ENCODE measurements at regions of chr18 and their contacts with region 1.

Region 1: GRCh38 chr18:12947355-12948041 is at the start of gene SEH1L:
- DNase-seq: peak; percentile 96
- ATAC-seq: peak; percentile 90
- H3K4me3 Mint-ChIP-seq: peak within 1 kb of the TSS; percentile 96
- H3K27ac Mint-ChIP-seq: peak within 1 kb of the TSS; percentile 97
- H3K4me1 Mint-ChIP-seq: peaks cover 24% of the 10 kb centered on the region
- H3K27me3 Mint-ChIP-seq: no peaks in the 10 kb centered on the region
- CTCF ChIP-seq: no peak
- total RNA-seq, gene SEH1L: 67.0 and 79.3 TPM in 2 replicates

Region 2: GRCh38 chr18:11908182-11909060 is 1039.1 kb before region 1 on chr18 and contains the start of gene MPPE1:
- CTCF ChIA-PET with region 1: no interaction called
- POLR2A ChIA-PET with region 1: no interaction called
- intact Hi-C with region 1: loop called (anchors 2 kb)
- DNase-seq: peak; percentile 87
- ATAC-seq: peak; percentile 91
- H3K4me3 Mint-ChIP-seq: peak within 1 kb of the TSS; percentile 94
- H3K27ac Mint-ChIP-seq: peak within 1 kb of the TSS; percentile 94
- H3K4me1 Mint-ChIP-seq: peaks cover 25% of the 10 kb centered on the region
- H3K27me3 Mint-ChIP-seq: no peaks in the 10 kb centered on the region
- CTCF ChIP-seq: no peak
- total RNA-seq, gene MPPE1: 39.0 and 52.9 TPM in 2 replicates

Region 3: GRCh38 chr18:12408247-12408869 is 539.1 kb before region 1 on chr18:
- CTCF ChIA-PET with region 1: no interaction called
- POLR2A ChIA-PET with region 1: no interaction called
- intact Hi-C with region 1: loop called (anchors 1 kb)
- DNase-seq: no peak
- ATAC-seq: peak; percentile 8
- H3K4me3 Mint-ChIP-seq: peak overlapping the region; percentile 76
- H3K27ac Mint-ChIP-seq: peak overlapping the region; percentile 68
- H3K4me1 Mint-ChIP-seq: peaks cover 18% of the 10 kb centered on the region
- H3K27me3 Mint-ChIP-seq: peaks cover 7% of the 10 kb centered on the region
- CTCF ChIP-seq: no peak

Region 4: GRCh38 chr18:12777500-12777944 is 170.0 kb before region 1 on chr18:
- CTCF ChIA-PET with region 1: no interaction called
- POLR2A ChIA-PET with region 1: no interaction called
- intact Hi-C with region 1: no loop called
- DNase-seq: no peak
- ATAC-seq: no peak
- H3K4me3 Mint-ChIP-seq: peak overlapping the region; percentile 56
- H3K27ac Mint-ChIP-seq: no peak overlapping the region
- H3K4me1 Mint-ChIP-seq: no peaks in the 10 kb centered on the region
- H3K27me3 Mint-ChIP-seq: no peaks in the 10 kb centered on the region
- CTCF ChIP-seq: no peak

Region 5: GRCh38 chr18:12838178-12838634 is 109.3 kb before region 1 on chr18:
- CTCF ChIA-PET with region 1: no interaction called
- POLR2A ChIA-PET with region 1: interaction called, 4 read pairs
- intact Hi-C with region 1: loop called (anchors 1 kb)
- DNase-seq: no peak
- ATAC-seq: no peak
- H3K4me3 Mint-ChIP-seq: peak overlapping the region; percentile 52
- H3K27ac Mint-ChIP-seq: peak overlapping the region; percentile 84
- H3K4me1 Mint-ChIP-seq: peaks cover 44% of the 10 kb centered on the region
- H3K27me3 Mint-ChIP-seq: no peaks in the 10 kb centered on the region
- CTCF ChIP-seq: no peak

Region 6: GRCh38 chr18:12990967-12991838 is 43.7 kb after region 1 on chr18 and contains the start of gene CEP192:
- CTCF ChIA-PET with region 1: interaction called, 3 read pairs
- POLR2A ChIA-PET with region 1: interaction called, 41 read pairs
- intact Hi-C with region 1: loop called (anchors 1 kb)
- DNase-seq: peak; percentile 93
- ATAC-seq: peak; percentile 96
- H3K4me3 Mint-ChIP-seq: peak within 1 kb of the TSS; percentile 93
- H3K27ac Mint-ChIP-seq: peak within 1 kb of the TSS; percentile 94
- H3K4me1 Mint-ChIP-seq: peaks cover 32% of the 10 kb centered on the region
- H3K27me3 Mint-ChIP-seq: no peaks in the 10 kb centered on the region
- CTCF ChIP-seq: no peak
- total RNA-seq, gene CEP192: 33.6 and 34.2 TPM in 2 replicates

Region 7: DNA sequence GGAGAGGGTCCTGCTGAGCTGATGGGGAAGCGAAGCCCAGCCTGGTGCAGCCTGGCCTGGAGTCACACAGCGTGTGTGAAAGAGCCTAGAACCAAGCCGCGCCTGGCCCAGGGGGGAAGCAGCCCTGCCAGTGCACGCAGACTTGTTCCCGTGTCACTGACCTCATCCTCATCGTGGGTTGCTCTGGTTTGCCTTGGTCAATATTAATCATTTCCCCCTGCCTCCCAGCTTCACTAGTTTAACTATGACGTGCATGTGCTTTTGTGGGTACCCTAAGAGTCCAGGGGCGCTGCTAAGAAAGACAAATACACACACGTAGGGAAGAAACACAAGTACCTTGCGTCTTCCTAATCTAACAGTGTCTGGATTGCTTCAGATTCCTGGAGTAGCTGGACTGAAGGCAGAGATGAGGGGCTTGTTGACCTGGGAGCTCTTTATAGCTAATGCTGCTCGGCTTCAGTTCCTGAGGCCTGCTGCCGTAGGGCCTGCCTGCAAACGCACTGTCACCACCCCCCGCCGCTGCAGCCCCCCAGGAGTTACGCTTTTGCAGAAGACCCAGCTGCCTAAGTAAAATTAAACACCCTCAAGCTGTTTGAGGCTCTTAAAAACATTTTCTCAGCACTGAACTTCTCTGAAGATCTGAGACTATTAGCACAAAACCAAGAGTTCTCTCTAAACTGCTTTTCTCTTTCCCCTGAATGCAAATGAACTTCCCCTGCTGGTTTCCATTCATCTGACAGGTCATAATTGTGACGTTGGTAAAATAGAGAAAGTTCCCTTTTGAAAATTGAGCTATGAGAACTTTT is 619.6 kb after region 1 on chr18:
- CTCF ChIA-PET with region 1: no interaction called
- POLR2A ChIA-PET with region 1: no interaction called
- intact Hi-C with region 1: loop called (anchors 5 kb)
- DNase-seq: peak; percentile 62
- ATAC-seq: peak; percentile 53
- H3K4me3 Mint-ChIP-seq: peak overlapping the region; percentile 81
- H3K27ac Mint-ChIP-seq: peak overlapping the region; percentile 99
- H3K4me1 Mint-ChIP-seq: peaks cover 83% of the 10 kb centered on the region
- H3K27me3 Mint-ChIP-seq: no peaks in the 10 kb centered on the region
- CTCF ChIP-seq: no peak

Measured in activated B cell treated with CpG ODN at 0.5 μM for 24 hours (primary cell).